ENCODE measurements at regions of chr15 and their contacts with region 1.

Region 1: GRCh38 chr15:63891079-63891767 is 57.5 kb upstream of the HERC1 start:
- DNase-seq: peak; percentile 63 to 76 (median 69)
- H3K4me3 ChIP-seq: no peak overlapping the region
- H3K4me3 Mint-ChIP-seq: peak overlapping the region in 5 of 8 donors; percentile 4 to 79 (median 42)
- H3K27ac ChIP-seq: peak overlapping the region; percentile 53
- H3K27ac Mint-ChIP-seq: peak overlapping the region; percentile 71 to 94 (median 87)
- H3K4me1 ChIP-seq: peaks cover 58% of the 10 kb centered on the region
- H3K4me1 Mint-ChIP-seq: peaks cover 40 to 56% (median 49%) of the 10 kb centered on the region in 4 donors
- H3K27me3 ChIP-seq: no peaks in the 10 kb centered on the region
- H3K27me3 Mint-ChIP-seq: no peaks in the 10 kb centered on the region

Region 2: DNA sequence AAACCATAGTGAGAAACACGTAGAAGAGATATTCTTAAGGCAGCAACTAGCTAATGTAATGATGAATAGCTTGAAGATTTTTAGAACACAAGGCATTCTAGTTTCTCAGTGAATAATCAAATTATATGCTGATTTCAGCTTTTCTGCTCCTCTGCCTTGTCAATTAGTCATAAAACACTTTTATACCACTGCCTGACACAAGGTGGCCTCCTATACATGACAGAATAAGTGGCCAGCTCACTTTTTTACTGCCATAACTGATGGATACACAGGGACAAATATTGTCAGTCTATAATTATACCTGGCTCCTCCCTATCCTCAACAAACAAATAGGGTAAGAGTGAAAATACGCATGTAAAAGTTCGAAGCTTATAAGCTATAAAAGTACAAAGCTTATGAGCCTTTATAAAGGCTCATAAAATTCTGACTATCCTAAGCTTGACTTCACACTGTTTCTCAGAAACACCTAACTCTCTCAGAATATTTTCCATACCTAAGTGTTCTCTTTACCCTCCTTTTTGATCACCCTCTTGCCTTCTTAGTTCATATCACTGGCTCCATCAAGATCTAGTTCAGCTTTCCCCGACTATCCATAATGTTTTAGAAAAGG is 139.0 kb before region 1 on chr15:
- CTCF ChIA-PET with region 1: interaction called, 50 read pairs
- POLR2A ChIA-PET with region 1: interaction called, 16 read pairs
- intact Hi-C with region 1: loop called (anchors 1 kb)
- DNase-seq: peak; percentile 44 to 66 (median 56)
- H3K4me3 ChIP-seq: no peak overlapping the region
- H3K4me3 Mint-ChIP-seq: no peak overlapping the region
- H3K27ac ChIP-seq: no peak overlapping the region
- H3K27ac Mint-ChIP-seq: peak overlapping the region in 4 of 7 donors; percentile 4 to 80 (median 56)
- H3K4me1 ChIP-seq: no peaks in the 10 kb centered on the region
- H3K4me1 Mint-ChIP-seq: peaks cover 0 to 3% (median 0%) of the 10 kb centered on the region in 4 donors
- H3K27me3 ChIP-seq: no peaks in the 10 kb centered on the region
- H3K27me3 Mint-ChIP-seq: no peaks in the 10 kb centered on the region

Region 3: GRCh38 chr15:63833021-63833696 is 58.1 kb before region 1 on chr15:
- CTCF ChIA-PET with region 1: interaction called, 8 read pairs
- POLR2A ChIA-PET with region 1: interaction called, 8 read pairs
- intact Hi-C with region 1: loop called (anchors 1 kb)
- DNase-seq: peak in 4 of 5 donors; percentile 40 to 53 (median 46)
- H3K4me3 ChIP-seq: peak overlapping the region; percentile 53 to 69
- H3K4me3 Mint-ChIP-seq: peak overlapping the region; percentile 94 to 98 (median 96)
- H3K27ac ChIP-seq: peak overlapping the region; percentile 94
- H3K27ac Mint-ChIP-seq: peak overlapping the region; percentile 95 to 100 (median 97)
- H3K4me1 ChIP-seq: peaks cover 56% of the 10 kb centered on the region
- H3K4me1 Mint-ChIP-seq: peaks cover 39 to 62% (median 48%) of the 10 kb centered on the region in 4 donors
- H3K27me3 ChIP-seq: no peaks in the 10 kb centered on the region
- H3K27me3 Mint-ChIP-seq: no peaks in the 10 kb centered on the region

Region 4: GRCh38 chr15:63905558-63906265 is 14.5 kb after region 1 on chr15:
- CTCF ChIA-PET with region 1: interaction called, 11 read pairs
- POLR2A ChIA-PET with region 1: interaction called, 4 read pairs
- intact Hi-C with region 1: no loop called
- DNase-seq: peak in 4 of 5 donors; percentile 25 to 38 (median 30)
- H3K4me3 ChIP-seq: no peak overlapping the region
- H3K4me3 Mint-ChIP-seq: peak overlapping the region in 7 of 8 donors; percentile 8 to 65 (median 50)
- H3K27ac ChIP-seq: peak overlapping the region; percentile 34
- H3K27ac Mint-ChIP-seq: peak overlapping the region; percentile 73 to 95 (median 92)
- H3K4me1 ChIP-seq: peaks cover 22% of the 10 kb centered on the region
- H3K4me1 Mint-ChIP-seq: peaks cover 13 to 28% (median 22%) of the 10 kb centered on the region in 4 donors
- H3K27me3 ChIP-seq: no peaks in the 10 kb centered on the region
- H3K27me3 Mint-ChIP-seq: no peaks in the 10 kb centered on the region

Region 5: GRCh38 chr15:63945007-63945788 is 54.0 kb after region 1 on chr15:
- CTCF ChIA-PET with region 1: interaction called, 19 read pairs
- POLR2A ChIA-PET with region 1: interaction called, 4 read pairs
- intact Hi-C with region 1: no loop called
- DNase-seq: peak; percentile 50 to 66 (median 56)
- H3K4me3 ChIP-seq: no peak overlapping the region
- H3K4me3 Mint-ChIP-seq: peak overlapping the region in 3 of 8 donors; percentile 4 to 57 (median 14)
- H3K27ac ChIP-seq: no peak overlapping the region
- H3K27ac Mint-ChIP-seq: peak overlapping the region in 5 of 7 donors; percentile 30 to 85 (median 61)
- H3K4me1 ChIP-seq: peaks cover 9% of the 10 kb centered on the region
- H3K4me1 Mint-ChIP-seq: peaks cover 6 to 20% (median 10%) of the 10 kb centered on the region in 4 donors
- H3K27me3 ChIP-seq: no peaks in the 10 kb centered on the region
- H3K27me3 Mint-ChIP-seq: no peaks in the 10 kb centered on the region

Region 6: GRCh38 chr15:64067564-64068030 is 176.4 kb after region 1 on chr15:
- CTCF ChIA-PET with region 1: interaction called, 3 read pairs
- POLR2A ChIA-PET with region 1: no interaction called
- intact Hi-C with region 1: loop called (anchors 5 kb)
- DNase-seq: peak; percentile 65 to 73 (median 66)
- H3K4me3 ChIP-seq: no peak overlapping the region
- H3K4me3 Mint-ChIP-seq: no peak overlapping the region
- H3K27ac ChIP-seq: no peak overlapping the region
- H3K27ac Mint-ChIP-seq: peak overlapping the region in 3 of 7 donors; percentile 43 to 77 (median 66)
- H3K4me1 ChIP-seq: peaks cover 9% of the 10 kb centered on the region
- H3K4me1 Mint-ChIP-seq: peaks cover 4 to 8% (median 5%) of the 10 kb centered on the region in 4 donors
- H3K27me3 ChIP-seq: no peaks in the 10 kb centered on the region
- H3K27me3 Mint-ChIP-seq: no peaks in the 10 kb centered on the region

Region 7: DNA sequence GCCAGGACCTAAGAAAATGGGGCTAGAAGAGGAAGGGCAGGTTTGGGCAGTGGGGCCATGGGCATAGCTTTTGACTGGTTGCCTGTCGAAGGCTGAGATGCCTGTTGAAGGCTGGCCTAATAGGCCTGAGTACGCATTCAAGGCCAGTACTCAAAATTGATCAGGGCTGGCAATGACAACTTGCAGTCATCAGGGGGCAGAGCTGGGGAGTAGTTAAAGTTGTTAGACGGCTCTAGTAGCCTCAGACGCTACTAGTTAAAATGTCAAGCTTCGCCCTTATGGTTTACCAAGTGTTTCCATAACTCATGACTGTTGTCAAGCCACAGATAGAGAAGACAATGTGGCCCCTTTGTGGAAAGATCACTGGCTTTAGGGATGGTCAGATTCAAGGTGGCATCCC is 1069.8 kb after region 1 on chr15:
- CTCF ChIA-PET with region 1: no interaction called
- POLR2A ChIA-PET with region 1: no interaction called
- intact Hi-C with region 1: no loop called
- DNase-seq: no peak
- H3K4me3 ChIP-seq: no peak overlapping the region
- H3K4me3 Mint-ChIP-seq: no peak overlapping the region
- H3K27ac ChIP-seq: no peak overlapping the region
- H3K27ac Mint-ChIP-seq: peak overlapping the region in 1 of 7 donors; percentile 50
- H3K4me1 ChIP-seq: no peaks in the 10 kb centered on the region
- H3K4me1 Mint-ChIP-seq: no peaks in the 10 kb centered on the region
- H3K27me3 ChIP-seq: no peaks in the 10 kb centered on the region
- H3K27me3 Mint-ChIP-seq: no peaks in the 10 kb centered on the region

Measured in CD4-positive, alpha-beta memory T cell (primary cell).